PC-3 (cell line): ENCODE measurements at regions of chr10 and their contacts with region 1.

Region 1: DNA sequence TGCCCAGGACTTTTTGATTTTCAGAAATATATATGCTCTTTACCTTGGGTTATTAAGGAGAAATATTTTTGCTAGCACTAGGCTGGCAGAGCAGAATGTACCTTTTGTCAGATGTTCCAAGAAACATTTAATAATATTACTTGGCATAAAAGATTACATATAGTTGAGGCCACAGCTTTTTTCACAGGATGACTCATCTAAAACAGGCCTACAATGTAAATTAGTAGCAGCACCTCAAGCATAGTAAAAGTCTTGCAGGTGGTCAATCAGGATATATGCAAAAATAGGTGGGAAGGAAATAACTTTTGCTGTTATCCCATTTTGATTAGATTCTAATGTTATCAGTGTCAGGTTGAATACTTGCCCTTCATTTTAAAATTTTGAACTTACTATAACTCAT is 14.9 kb upstream of the ITGB1 start:
- DNase-seq: peak; percentile 60
- ATAC-seq: peak; percentile 79
- H3K4me3 ChIP-seq: no peak overlapping the region
- H3K27ac ChIP-seq: no peak overlapping the region
- H3K4me1 ChIP-seq: peaks cover 26% of the 10 kb centered on the region
- H3K27me3 ChIP-seq: no peaks in the 10 kb centered on the region
- CTCF ChIP-seq: no peak

Region 2: GRCh38 chr10:32600317-32600716 is 372.6 kb before region 1 on chr10:
- CTCF ChIA-PET with region 1: no interaction called
- POLR2A ChIA-PET with region 1: no interaction called
- intact Hi-C with region 1: no loop called
- DNase-seq: no peak
- ATAC-seq: no peak
- H3K4me3 ChIP-seq: no peak overlapping the region
- H3K27ac ChIP-seq: no peak overlapping the region
- H3K4me1 ChIP-seq: no peaks in the 10 kb centered on the region
- H3K27me3 ChIP-seq: no peaks in the 10 kb centered on the region
- CTCF ChIP-seq: no peak

Region 3: DNA sequence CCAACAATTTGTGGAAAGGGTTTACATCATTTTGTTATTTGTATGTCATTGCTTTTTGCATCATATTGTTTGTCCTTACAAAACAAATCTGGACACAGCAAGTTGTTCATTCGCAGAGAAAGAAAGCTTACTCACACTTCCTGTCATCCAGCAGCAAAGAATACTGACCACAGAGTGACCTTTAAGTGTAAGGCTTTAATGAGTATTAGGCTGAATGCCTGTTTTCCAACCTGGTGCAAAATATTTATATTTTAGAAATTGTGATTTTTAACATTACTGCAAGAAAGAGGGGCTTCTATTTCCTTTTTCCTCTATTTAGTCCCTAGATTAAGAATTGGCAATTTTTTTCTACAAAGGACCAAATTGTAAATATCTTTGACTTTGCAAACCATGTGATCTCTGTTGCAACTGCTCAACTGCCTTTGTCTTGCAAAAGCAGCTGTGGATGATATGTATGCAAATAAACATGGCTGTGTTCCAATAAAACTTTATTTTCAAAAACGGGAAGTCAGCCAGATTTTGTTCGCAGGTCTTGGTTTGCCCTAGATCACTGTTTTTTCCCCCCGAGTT is 12.9 kb after region 1 on chr10:
- CTCF ChIA-PET with region 1: interaction called, 3 read pairs
- POLR2A ChIA-PET with region 1: interaction called, 24 read pairs
- intact Hi-C with region 1: no loop called
- DNase-seq: peak; percentile 95
- ATAC-seq: peak; percentile 28
- H3K4me3 ChIP-seq: no peak overlapping the region
- H3K27ac ChIP-seq: peak overlapping the region; percentile 94
- H3K4me1 ChIP-seq: peaks cover 58% of the 10 kb centered on the region
- H3K27me3 ChIP-seq: no peaks in the 10 kb centered on the region
- CTCF ChIP-seq: no peak

Region 4: GRCh38 chr10:33180390-33180789 is 207.5 kb after region 1 on chr10:
- CTCF ChIA-PET with region 1: no interaction called
- POLR2A ChIA-PET with region 1: no interaction called
- intact Hi-C with region 1: no loop called
- DNase-seq: peak; percentile 82
- ATAC-seq: peak; percentile 8
- H3K4me3 ChIP-seq: no peak overlapping the region
- H3K27ac ChIP-seq: peak overlapping the region; percentile 9
- H3K4me1 ChIP-seq: peaks cover 36% of the 10 kb centered on the region
- H3K27me3 ChIP-seq: no peaks in the 10 kb centered on the region
- CTCF ChIP-seq: no peak